ENCODE measurements at regions of chr3 and their contacts with region 1.

Region 1: GRCh38 chr3:121545574-121546455 is at the start of gene POLQ:
- DNase-seq: peak; percentile 87
- H3K4me3 Mint-ChIP-seq: peak within 1 kb of the TSS; percentile 83
- H3K27ac Mint-ChIP-seq: peak within 1 kb of the TSS; percentile 91
- H3K4me1 Mint-ChIP-seq: peaks cover 7% of the 10 kb centered on the region
- H3K27me3 Mint-ChIP-seq: no peaks in the 10 kb centered on the region
- CTCF ChIP-seq: no peak
- total RNA-seq, gene POLQ: 13.7 and 15.5 TPM in 2 replicates

Region 2: DNA sequence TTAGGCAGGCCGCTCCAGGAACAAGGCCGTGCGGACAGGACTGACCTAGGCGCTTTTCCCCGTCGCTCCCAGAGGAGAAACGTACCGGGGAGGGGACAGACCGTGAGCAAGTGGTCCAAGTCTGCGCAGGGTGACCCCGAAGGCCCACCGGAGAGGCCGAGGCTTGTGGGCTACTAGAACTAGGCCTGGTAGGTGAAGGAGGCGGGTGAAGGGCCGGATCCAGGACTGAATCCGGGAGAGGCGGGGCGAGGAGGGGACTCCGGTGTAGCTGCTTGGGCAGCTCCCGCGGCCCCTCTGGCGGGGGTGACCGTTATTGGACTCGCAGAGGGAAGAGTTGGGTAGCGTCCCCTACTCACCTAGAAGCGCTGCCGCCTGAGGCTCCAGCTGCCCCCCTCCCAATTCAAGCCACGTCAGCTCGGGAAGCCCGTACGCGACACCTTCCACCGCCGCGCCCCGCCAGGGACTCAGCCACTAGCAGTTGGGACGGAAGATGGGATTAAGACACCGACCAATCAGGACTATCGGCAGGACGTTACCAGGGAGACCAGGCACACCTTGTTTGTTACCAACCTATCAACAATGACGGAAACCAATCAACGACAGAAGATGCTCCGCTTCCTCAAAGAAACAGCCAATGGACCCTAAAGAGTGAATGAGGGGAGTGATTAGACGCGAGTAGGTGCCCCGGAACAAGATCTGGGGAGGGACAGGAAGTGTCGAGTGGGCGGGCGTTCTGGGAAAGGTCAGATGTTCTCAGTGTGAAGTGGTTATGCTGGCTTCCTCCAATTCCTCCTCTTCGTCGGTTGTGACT is 203.7 kb after region 1 on chr3 and contains the start of gene GOLGB1:
- CTCF ChIA-PET with region 1: no interaction called
- intact Hi-C with region 1: loop called (anchors 10 kb)
- DNase-seq: peak; percentile 93
- H3K4me3 Mint-ChIP-seq: no peak within 1 kb of the TSS
- H3K27ac Mint-ChIP-seq: no peak within 1 kb of the TSS
- H3K4me1 Mint-ChIP-seq: peaks cover 13% of the 10 kb centered on the region
- H3K27me3 Mint-ChIP-seq: no peaks in the 10 kb centered on the region
- CTCF ChIP-seq: no peak
- total RNA-seq, gene GOLGB1: 42.4 and 42.8 TPM in 2 replicates

Region 3: DNA sequence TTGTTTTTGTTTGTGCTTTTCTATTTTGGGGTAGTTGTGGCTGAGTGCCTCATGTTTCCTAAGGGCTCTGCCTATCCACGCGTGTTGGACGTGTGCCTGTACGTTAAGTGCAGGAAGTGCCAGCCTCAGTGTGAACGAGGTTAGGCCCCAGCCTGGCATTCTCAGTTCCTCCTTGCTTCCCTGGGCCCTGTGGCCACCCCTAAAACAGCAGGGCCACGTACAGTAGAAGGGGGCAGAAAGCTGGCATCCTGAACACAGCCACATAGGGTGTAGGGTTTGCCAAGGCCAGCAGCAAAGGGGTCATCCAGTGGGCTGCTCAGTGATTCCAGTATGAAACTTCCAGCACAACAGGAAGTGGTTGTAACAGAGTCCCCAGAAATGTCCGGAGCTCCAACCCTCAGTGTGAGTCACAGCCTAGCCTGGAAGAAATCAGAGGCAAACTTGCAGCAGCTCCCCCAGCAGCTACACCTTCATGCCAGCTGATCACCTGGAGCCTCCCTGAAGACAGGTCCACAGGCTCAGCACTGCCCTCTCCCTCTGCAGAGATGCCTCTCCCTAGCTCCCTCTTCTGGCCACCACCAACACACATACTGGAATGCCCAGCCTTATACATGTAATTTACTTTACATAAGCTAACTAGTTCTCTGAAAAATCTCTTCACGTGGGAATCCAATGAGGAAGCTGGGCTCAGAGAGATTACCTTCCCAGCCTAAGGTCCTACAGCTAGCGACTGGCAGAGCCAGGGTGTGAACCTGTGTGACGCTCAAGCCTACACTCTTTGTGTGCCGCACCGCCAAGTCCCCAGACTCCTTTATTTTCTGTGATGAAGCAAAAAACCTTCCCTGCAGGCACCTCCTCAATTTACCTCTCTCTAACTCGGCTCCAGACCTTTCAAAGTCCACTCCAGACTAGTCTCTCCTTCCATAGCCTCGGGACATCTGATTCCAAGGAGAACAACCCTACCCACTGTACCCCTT is 449.6 kb after region 1 on chr3:
- CTCF ChIA-PET with region 1: interaction called, 4 read pairs
- intact Hi-C with region 1: loop called (anchors 5 kb)
- DNase-seq: peak; percentile 82
- H3K4me3 Mint-ChIP-seq: no peak overlapping the region
- H3K27ac Mint-ChIP-seq: peak overlapping the region; percentile 89
- H3K4me1 Mint-ChIP-seq: peaks cover 37% of the 10 kb centered on the region
- H3K27me3 Mint-ChIP-seq: no peaks in the 10 kb centered on the region
- CTCF ChIP-seq: peak; percentile 54

Region 4: GRCh38 chr3:122258757-122259371 is 713.0 kb after region 1 on chr3:
- CTCF ChIA-PET with region 1: no interaction called
- intact Hi-C with region 1: loop called (anchors 2 kb)
- DNase-seq: peak; percentile 79
- H3K4me3 Mint-ChIP-seq: no peak overlapping the region
- H3K27ac Mint-ChIP-seq: no peak overlapping the region
- H3K4me1 Mint-ChIP-seq: no peaks in the 10 kb centered on the region
- H3K27me3 Mint-ChIP-seq: no peaks in the 10 kb centered on the region
- CTCF ChIP-seq: peak; percentile 60

Region 5: DNA sequence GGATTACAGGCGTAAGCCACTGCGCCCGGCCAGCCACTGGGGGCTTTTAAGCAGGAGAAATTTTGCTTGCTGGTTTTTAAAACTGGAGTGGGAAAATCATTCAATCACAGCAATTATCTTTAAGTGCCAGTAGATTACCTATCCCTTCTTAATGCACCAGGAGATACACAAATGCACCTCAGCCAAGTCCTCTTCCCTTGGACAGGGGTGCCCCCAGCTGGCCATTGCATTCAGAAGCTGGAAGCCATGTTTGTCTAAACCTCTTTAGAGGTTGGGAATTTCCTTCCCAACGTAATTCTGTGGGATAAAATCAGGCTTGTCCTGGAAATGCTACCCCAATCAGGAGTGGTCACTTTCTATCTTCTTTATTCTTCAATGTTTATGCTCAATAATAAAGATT is 810.6 kb after region 1 on chr3:
- CTCF ChIA-PET with region 1: no interaction called
- intact Hi-C with region 1: loop called (anchors 10 kb)
- DNase-seq: peak; percentile 66
- H3K4me3 Mint-ChIP-seq: no peak overlapping the region
- H3K27ac Mint-ChIP-seq: no peak overlapping the region
- H3K4me1 Mint-ChIP-seq: no peaks in the 10 kb centered on the region
- H3K27me3 Mint-ChIP-seq: no peaks in the 10 kb centered on the region
- CTCF ChIP-seq: peak; percentile 27